Activated CD4-positive, alpha-beta T cell treated with anti-CD3 and anti-CD28 coated beads, Interleukin-2, amount 10 ng/mL, durations not matched to agents 24 days and 14 days (primary cell): ENCODE measurements at regions of chr19 and their contacts with region 1.

Region 1: GRCh38 chr19:15466851-15467733 is 2.7 kb upstream of the RASAL3 start:
- DNase-seq: peak; percentile 91
- H3K4me3 Mint-ChIP-seq: peak overlapping the region; percentile 58
- H3K27ac Mint-ChIP-seq: peak overlapping the region; percentile 90
- H3K4me1 Mint-ChIP-seq: peaks cover 55% of the 10 kb centered on the region
- H3K27me3 Mint-ChIP-seq: peaks cover 12% of the 10 kb centered on the region

Region 2: DNA sequence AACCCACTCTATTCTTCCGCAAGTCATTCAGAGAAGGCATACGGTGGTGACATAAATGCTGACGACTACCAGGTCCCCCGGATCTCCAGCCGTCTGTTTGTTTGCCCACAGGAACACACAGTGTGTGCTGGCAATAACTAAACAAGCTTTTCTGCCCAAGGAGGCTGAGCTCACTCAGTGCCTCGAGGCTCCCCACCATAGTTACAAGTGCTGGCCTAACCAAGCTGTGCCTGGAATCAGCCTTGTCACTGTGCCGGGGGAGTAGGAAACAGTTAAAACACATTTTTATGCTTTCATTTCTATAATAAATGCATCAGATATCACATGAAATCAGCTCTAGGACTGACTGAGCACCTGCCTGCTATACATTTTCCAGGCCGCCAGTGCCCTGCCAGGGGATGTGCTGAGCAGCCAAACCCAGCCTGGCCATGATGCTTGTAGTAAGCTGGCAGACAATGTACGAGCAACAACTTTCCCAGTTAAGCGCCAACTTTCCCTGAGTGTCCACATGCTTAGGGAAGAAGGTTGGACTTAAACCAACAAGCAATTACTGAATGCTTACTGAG is 162.9 kb before region 1 on chr19:
- intact Hi-C with region 1: loop called (anchors 5 kb)
- DNase-seq: no peak
- H3K4me3 Mint-ChIP-seq: no peak overlapping the region
- H3K27ac Mint-ChIP-seq: peak overlapping the region; percentile 87
- H3K4me1 Mint-ChIP-seq: peaks cover 61% of the 10 kb centered on the region
- H3K27me3 Mint-ChIP-seq: no peaks in the 10 kb centered on the region

Region 3: GRCh38 chr19:15418588-15419412 is 48.3 kb before region 1 on chr19 and contains the start of gene AKAP8L:
- intact Hi-C with region 1: loop called (anchors 1 kb)
- DNase-seq: peak; percentile 100
- H3K4me3 Mint-ChIP-seq: peak within 1 kb of the TSS; percentile 100
- H3K27ac Mint-ChIP-seq: peak within 1 kb of the TSS; percentile 100
- H3K4me1 Mint-ChIP-seq: peaks cover 33% of the 10 kb centered on the region
- H3K27me3 Mint-ChIP-seq: no peaks in the 10 kb centered on the region
- total RNA-seq, gene AKAP8L: 76.8 and 80.1 TPM in 2 replicates

Region 4: GRCh38 chr19:15432629-15433518 is 34.2 kb before region 1 on chr19:
- intact Hi-C with region 1: loop called (anchors 2 kb)
- DNase-seq: peak; percentile 99
- H3K4me3 Mint-ChIP-seq: peak overlapping the region; percentile 97
- H3K27ac Mint-ChIP-seq: peak overlapping the region; percentile 97
- H3K4me1 Mint-ChIP-seq: peaks cover 28% of the 10 kb centered on the region
- H3K27me3 Mint-ChIP-seq: peaks cover 2% of the 10 kb centered on the region

Region 5: GRCh38 chr19:15449620-15450527 is 17.2 kb before region 1 on chr19 and contains the start of gene WIZ:
- intact Hi-C with region 1: no loop called
- DNase-seq: peak; percentile 94
- H3K4me3 Mint-ChIP-seq: peak within 1 kb of the TSS; percentile 74
- H3K27ac Mint-ChIP-seq: peak within 1 kb of the TSS; percentile 92
- H3K4me1 Mint-ChIP-seq: peaks cover 30% of the 10 kb centered on the region
- H3K27me3 Mint-ChIP-seq: no peaks in the 10 kb centered on the region
- total RNA-seq, gene WIZ: 36.3 and 36.5 TPM in 2 replicates

Region 6: DNA sequence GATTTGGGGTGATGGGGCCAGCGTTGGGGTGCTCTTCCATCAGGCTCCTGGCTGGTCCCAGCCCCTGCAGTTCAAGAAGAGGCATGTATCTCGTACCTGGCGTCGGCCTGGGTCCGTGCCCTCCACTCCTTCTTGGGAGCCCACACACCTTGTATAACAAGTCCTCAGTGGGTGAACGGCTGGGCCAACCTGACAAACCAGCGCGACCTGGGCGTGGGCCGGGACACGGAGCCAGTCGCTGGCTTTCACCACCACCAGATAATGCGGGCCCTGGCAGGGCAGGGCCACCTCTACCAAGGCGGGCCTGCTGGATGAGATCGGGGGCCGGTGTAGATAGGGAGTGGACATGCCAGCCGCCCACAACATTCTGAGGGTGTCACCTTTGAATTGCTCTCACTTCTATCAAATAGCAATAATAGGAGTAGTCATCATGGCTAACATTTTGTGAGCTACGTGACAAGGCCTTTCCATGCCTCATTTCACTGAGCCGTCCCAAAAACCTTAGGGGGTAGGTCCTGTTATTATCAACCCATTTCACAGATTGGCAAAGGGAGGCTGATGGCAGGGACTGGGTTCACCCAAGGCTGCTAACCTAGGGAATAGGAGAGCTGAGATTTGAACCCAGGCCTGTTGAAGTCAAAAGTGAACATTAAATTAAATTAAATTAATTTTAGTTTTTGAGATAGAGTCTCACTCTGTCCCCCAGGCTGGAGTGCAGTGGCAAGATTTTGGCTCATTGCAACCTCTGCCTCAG is 44.8 kb after region 1 on chr19:
- intact Hi-C with region 1: loop called (anchors 1 kb)
- DNase-seq: no peak
- H3K4me3 Mint-ChIP-seq: no peak overlapping the region
- H3K27ac Mint-ChIP-seq: no peak overlapping the region
- H3K4me1 Mint-ChIP-seq: peaks cover 22% of the 10 kb centered on the region
- H3K27me3 Mint-ChIP-seq: peaks cover 30% of the 10 kb centered on the region

Region 7: GRCh38 chr19:15532779-15533521 is 65.9 kb after region 1 on chr19:
- intact Hi-C with region 1: loop called (anchors 1 kb)
- DNase-seq: no peak
- H3K4me3 Mint-ChIP-seq: peak overlapping the region; percentile 20
- H3K27ac Mint-ChIP-seq: peak overlapping the region; percentile 42
- H3K4me1 Mint-ChIP-seq: peaks cover 31% of the 10 kb centered on the region
- H3K27me3 Mint-ChIP-seq: peaks cover 4% of the 10 kb centered on the region

Region 8: DNA sequence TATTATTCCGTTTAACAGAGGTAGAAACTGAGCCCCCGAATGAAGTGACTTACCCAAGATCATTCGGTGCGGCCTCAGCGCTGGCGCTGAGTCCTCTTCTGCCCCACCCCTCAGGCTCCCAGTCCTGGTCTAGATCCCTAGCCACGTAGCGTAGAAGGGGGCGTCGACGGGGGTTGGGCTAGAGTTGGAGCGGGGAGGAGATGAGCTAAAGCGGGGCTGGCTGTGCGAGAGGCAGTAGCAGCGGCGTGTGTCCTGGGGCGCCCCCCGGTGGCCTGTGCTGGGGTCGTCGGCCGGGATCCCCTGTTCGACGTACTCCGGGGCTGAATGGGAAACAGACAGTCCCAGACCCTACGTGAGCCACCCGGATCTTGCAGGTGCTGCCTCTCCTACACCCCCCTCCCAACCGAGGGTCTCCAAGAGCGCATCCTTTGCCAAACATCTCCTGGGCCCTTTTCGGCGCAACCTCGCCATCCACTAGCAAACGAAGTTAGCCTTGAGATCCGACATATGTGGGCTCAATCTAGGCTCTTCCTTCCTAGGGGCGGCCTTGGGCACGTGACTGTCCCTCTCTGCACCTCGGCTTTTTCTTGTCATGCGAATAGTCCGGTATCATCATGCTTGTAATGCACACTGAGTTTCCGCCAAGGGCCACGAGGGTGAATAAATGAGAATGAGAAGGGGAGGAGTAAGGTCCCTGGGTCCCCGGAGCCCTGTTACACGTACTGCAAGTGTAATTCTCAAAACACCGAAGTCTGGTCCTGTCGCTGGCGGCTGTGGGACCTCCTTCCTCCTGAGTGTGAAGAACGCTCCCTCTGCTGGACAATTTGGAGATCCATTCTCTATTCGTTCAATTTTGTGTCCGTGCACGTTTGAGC is 88.9 kb after region 1 on chr19:
- intact Hi-C with region 1: loop called (anchors 1 kb)
- DNase-seq: peak; percentile 99
- H3K4me3 Mint-ChIP-seq: peak overlapping the region; percentile 85
- H3K27ac Mint-ChIP-seq: peak overlapping the region; percentile 88
- H3K4me1 Mint-ChIP-seq: peaks cover 21% of the 10 kb centered on the region
- H3K27me3 Mint-ChIP-seq: peaks cover 9% of the 10 kb centered on the region